Right ventricle myocardium superior (tissue), 1 donor: ENCODE measurements at regions of chr2 and their contacts with region 1.

Region 1: GRCh38 chr2:236180831-236181453 is 12.8 kb upstream of the GBX2 start:
- DNase-seq: no peak
- ATAC-seq: peak; percentile 51

Region 2: DNA sequence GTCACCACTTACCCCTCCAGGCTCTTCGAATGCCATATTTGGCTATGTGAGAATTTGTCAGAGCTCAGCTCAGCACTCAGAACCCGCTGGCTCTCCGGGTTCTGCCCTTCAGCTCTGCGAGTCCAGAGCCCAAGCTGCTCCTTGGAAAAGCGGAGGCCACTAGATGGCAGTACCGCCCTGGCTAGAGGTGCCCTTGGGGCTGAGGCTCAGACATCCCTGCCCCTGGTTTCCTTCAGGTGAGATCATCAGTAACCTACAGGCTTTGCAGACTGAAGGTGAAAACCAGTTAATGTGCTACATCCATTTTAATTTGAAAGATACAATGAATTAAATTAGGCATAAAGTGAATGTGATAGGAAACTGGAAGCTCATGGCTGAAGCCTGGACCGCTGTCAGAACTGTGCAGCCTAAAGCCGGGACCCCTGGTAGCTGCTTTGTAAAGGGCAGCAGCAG is 401.5 kb before region 1 on chr2:
- intact Hi-C with region 1: loop called (anchors 5 kb)
- DNase-seq: peak; percentile 79
- ATAC-seq: peak; percentile 92

Region 3: GRCh38 chr2:235917506-235917905 is 263.4 kb before region 1 on chr2:
- intact Hi-C with region 1: no loop called
- DNase-seq: no peak
- ATAC-seq: no peak

Region 4: GRCh38 chr2:236235185-236235584 is 54.2 kb after region 1 on chr2:
- intact Hi-C with region 1: no loop called
- DNase-seq: no peak
- ATAC-seq: no peak